Gastrocnemius medialis (tissue), 4 donors: ENCODE measurements at regions of chr2 and their contacts with region 1.

Region 1: DNA sequence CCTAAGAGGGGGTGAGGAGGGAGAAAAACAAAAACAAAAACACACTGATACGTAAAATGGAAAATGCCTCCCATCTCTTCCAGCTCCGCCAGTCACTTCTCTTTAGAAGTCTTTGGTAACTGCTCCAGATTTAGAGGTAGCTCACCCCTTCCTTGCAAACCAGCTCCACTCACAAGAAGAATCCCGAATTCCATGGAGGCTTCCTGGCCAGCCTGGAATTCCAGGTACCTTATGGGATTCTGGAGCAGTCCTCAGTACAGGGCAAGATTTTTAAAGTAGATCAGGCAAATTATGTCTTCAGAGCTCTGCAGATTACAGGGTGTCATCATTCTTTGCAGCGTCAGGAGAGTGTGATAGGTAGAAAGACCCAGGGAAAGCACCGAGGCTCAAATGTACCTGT is 4.8 kb downstream of the STON1 start:
- DNase-seq: no peak
- ATAC-seq: no peak
- H3K4me3 ChIP-seq: no peak overlapping the region
- H3K27ac ChIP-seq: no peak overlapping the region
- H3K4me1 ChIP-seq: peaks cover 0 to 9% of the 10 kb centered on the region in 2 donors
- H3K27me3 ChIP-seq: peaks cover 7 to 10% (median 7%) of the 10 kb centered on the region in 3 donors
- CTCF ChIP-seq: no peak
- POLR2A ChIP-seq: no peak

Region 2: DNA sequence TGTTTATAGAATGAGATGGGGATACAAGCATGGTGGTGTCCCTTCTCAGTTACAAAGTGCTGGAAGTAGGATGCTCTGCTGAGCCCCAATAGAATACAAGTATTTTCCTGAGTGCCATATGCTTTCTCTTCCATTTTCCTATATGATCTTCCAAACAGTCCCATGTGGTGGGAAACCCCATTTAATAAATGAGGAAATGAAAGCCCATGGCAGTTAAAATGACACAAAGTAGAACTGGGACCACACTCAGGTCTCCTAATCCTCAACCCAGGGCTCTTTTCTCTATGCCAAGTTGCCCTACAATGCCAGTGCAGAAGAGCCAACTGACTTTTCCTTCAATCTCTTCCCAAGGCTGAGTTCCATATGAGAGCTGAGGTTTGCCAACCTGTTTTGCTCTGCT is 418.3 kb before region 1 on chr2:
- in situ Hi-C with region 1: no loop called
- intact Hi-C with region 1: loop called (anchors 5 kb)
- DNase-seq: no peak
- ATAC-seq: no peak
- H3K4me3 ChIP-seq: no peak overlapping the region
- H3K27ac ChIP-seq: no peak overlapping the region
- H3K4me1 ChIP-seq: no peaks in the 10 kb centered on the region
- H3K27me3 ChIP-seq: no peaks in the 10 kb centered on the region
- CTCF ChIP-seq: no peak
- POLR2A ChIP-seq: no peak

Region 3: GRCh38 chr2:48790407-48791170 is 255.8 kb after region 1 on chr2:
- in situ Hi-C with region 1: no loop called
- intact Hi-C with region 1: no loop called
- DNase-seq: no peak
- ATAC-seq: no peak
- H3K4me3 ChIP-seq: no peak overlapping the region
- H3K27ac ChIP-seq: no peak overlapping the region
- H3K4me1 ChIP-seq: no peaks in the 10 kb centered on the region
- H3K27me3 ChIP-seq: no peaks in the 10 kb centered on the region
- CTCF ChIP-seq: no peak
- POLR2A ChIP-seq: no peak